Cardiac septum (tissue), 1 donor: ENCODE measurements at regions of chr4 and their contacts with region 1.

Region 1: GRCh38 chr4:108172753-108173598 is 4.2 kb upstream of the LEF1 start:
- DNase-seq: no peak

Region 2: DNA sequence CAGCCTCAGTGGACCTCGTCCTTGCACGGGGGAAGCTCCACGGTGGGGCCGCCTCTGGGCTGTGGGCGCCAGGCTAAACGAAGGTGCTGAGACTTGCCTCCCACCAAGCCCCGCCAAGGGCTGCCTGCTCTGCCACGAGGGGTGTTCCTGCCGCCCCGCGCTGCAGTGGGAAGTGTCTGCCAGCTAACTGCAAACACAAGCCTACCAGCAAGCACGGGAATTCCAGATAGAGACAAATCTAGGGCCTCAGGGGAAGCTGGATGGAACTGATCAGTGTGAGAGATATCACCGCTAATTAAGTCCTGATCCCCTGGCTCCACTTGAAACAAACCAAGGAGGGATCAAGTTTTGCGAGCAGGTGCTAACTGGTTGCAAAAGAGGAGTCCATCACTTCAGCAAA is 177.4 kb after region 1 on chr4:
- intact Hi-C with region 1: loop called (anchors 5 kb)
- DNase-seq: no peak

Region 3: GRCh38 chr4:108512615-108513505 is 339.9 kb after region 1 on chr4:
- intact Hi-C with region 1: loop called (anchors 10 kb)
- DNase-seq: no peak

Region 4: DNA sequence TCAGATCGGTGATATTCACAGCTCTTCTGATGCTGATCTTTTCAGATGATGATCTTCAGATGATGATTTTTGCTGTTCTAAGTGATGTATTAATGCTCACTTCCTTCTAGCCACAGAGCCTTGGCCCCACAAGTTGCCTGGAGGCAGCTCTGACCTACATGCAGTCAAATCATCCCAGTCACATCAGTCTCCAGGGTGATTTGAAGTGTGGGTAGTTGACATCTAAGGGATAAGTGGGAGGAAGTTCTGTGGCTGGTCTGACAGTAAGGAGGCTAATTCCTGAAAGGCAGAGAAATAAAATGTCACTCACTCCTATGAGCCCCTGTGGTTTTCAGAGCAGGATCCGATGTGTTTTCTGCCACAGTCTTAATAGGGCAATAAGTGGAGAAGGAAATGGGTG is 367.6 kb after region 1 on chr4:
- intact Hi-C with region 1: no loop called
- DNase-seq: no peak

Region 5: DNA sequence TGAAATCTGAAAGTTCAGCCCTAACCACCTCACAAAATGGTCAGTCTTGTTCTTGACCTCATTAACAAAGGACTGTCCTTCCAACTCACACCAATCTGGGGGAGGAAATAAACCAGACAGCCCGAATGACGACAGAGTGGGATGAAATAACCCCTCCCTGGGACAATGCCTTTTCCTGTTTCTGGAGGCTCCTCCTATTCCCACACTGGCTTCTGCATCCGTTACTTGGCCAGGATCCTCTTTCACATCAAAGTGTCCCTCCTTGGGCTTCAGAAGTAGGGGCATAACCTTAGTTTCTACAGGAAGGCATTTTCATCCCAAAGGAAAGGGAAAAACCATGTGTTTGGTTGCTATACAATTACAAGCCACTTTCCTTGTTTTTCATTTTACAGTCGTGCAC is 387.6 kb after region 1 on chr4:
- intact Hi-C with region 1: loop called (anchors 10 kb)
- DNase-seq: no peak

Region 6: GRCh38 chr4:108988464-108989195 is 815.7 kb after region 1 on chr4:
- intact Hi-C with region 1: no loop called
- DNase-seq: no peak